ENCODE measurements at regions of chr6 and their contacts with region 1.

Region 1: DNA sequence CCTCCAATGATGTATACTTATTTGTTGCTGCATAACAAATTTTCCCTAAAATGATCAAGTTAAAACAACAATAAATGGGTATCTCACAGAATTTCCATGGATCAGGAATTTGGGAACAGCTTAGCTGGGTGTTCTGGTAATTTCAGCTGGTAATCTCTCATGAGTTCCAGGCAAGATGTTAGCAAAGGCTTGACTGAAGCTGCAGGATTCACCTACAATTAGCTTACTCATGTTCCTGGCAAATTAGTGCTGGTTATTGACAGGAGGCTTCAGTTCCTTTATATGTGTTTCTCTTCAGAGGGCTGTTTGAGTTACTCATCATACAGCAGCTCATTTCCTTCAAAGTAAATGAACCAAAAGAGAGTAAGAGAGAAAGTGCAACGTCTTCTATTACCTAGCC is 506.3 kb upstream of the IMPG1 start:
- DNase-seq: no peak
- H3K4me3 ChIP-seq: no peak overlapping the region
- H3K27ac ChIP-seq: no peak overlapping the region
- H3K4me1 ChIP-seq: no peaks in the 10 kb centered on the region
- CTCF ChIP-seq: no peak

Region 2: GRCh38 chr6:76682842-76683241 is 104.1 kb after region 1 on chr6:
- CTCF ChIA-PET with region 1: no interaction called
- POLR2A ChIA-PET with region 1: no interaction called
- intact Hi-C with region 1: no loop called
- DNase-seq: peak; percentile 16
- H3K4me3 ChIP-seq: no peak overlapping the region
- H3K27ac ChIP-seq: no peak overlapping the region
- H3K4me1 ChIP-seq: no peaks in the 10 kb centered on the region
- CTCF ChIP-seq: peak; percentile 73

Region 3: DNA sequence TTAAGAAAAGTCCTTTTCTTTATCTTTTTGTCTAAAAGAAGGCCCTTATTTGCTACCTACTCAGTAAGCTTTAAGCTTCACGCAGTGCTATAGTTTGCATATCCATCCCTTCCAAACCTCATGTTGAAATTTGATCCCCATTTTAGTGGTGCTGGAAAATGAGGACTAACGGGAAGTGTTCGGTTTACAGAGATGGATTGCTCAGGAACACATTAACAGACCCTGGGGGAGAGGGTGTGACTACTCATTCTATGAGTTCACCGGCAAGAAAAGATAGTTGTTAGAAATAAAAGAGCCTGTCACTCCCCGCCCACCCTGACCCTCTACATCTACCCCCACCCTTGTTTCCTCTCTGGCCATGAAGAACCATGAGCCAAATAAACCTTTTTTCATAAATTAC is 1620.3 kb after region 1 on chr6:
- CTCF ChIA-PET with region 1: no interaction called
- POLR2A ChIA-PET with region 1: interaction called, 11 read pairs
- intact Hi-C with region 1: no loop called
- DNase-seq: no peak
- H3K4me3 ChIP-seq: no peak overlapping the region
- H3K27ac ChIP-seq: no peak overlapping the region
- H3K4me1 ChIP-seq: no peaks in the 10 kb centered on the region
- CTCF ChIP-seq: no peak

Measured in OCI-LY7 (cell line).